Activated CD4-positive, alpha-beta T cell treated with anti-CD3 and anti-CD28 coated beads for 36 hours (primary cell): ENCODE measurements at regions of chr7 and their contacts with region 1.

Region 1: GRCh38 chr7:150404805-150405583 is 25.9 kb downstream of the ZNF775 start:
- DNase-seq: peak; percentile 85
- ATAC-seq: peak; percentile 74
- H3K4me3 Mint-ChIP-seq: peak overlapping the region; percentile 90
- H3K27ac Mint-ChIP-seq: peak overlapping the region; percentile 91
- H3K4me1 Mint-ChIP-seq: peaks cover 49% of the 10 kb centered on the region
- H3K27me3 Mint-ChIP-seq: no peaks in the 10 kb centered on the region

Region 2: GRCh38 chr7:150322833-150323681 is 81.9 kb before region 1 on chr7 and contains the starts of genes ACTR3C and LRRC61:
- CTCF ChIA-PET with region 1: no interaction called
- POLR2A ChIA-PET with region 1: no interaction called
- intact Hi-C with region 1: loop called (anchors 1 to 2 kb)
- DNase-seq: peak; percentile 78
- ATAC-seq: peak; percentile 24
- H3K4me3 Mint-ChIP-seq: peak within 1 kb of the TSS; percentile 91
- H3K27ac Mint-ChIP-seq: peak within 1 kb of the TSS; percentile 99
- H3K4me1 Mint-ChIP-seq: peaks cover 52% of the 10 kb centered on the region
- H3K27me3 Mint-ChIP-seq: no peaks in the 10 kb centered on the region
- total RNA-seq, gene ACTR3C: 3.2 to 4.7 TPM
- total RNA-seq, gene LRRC61: 13.0 to 17.4 TPM

Region 3: GRCh38 chr7:150368096-150368883 is 36.7 kb before region 1 on chr7 and contains the start of gene REPIN1:
- CTCF ChIA-PET with region 1: interaction called, 5 read pairs
- POLR2A ChIA-PET with region 1: interaction called, 3 read pairs
- intact Hi-C with region 1: loop called (anchors 1 to 2 kb)
- DNase-seq: peak; percentile 88
- ATAC-seq: peak; percentile 63
- H3K4me3 Mint-ChIP-seq: peak within 1 kb of the TSS; percentile 90
- H3K27ac Mint-ChIP-seq: peak within 1 kb of the TSS; percentile 97
- H3K4me1 Mint-ChIP-seq: peaks cover 37% of the 10 kb centered on the region
- H3K27me3 Mint-ChIP-seq: no peaks in the 10 kb centered on the region
- total RNA-seq, gene REPIN1: 48.2 to 55.6 TPM

Region 4: GRCh38 chr7:150420987-150421674 is 16.1 kb after region 1 on chr7:
- CTCF ChIA-PET with region 1: interaction called, 10 read pairs
- POLR2A ChIA-PET with region 1: no interaction called
- intact Hi-C with region 1: loop called (anchors 1 to 2 kb)
- DNase-seq: peak; percentile 93
- ATAC-seq: peak; percentile 100
- H3K4me3 Mint-ChIP-seq: no peak overlapping the region
- H3K27ac Mint-ChIP-seq: peak overlapping the region; percentile 2
- H3K4me1 Mint-ChIP-seq: peaks cover 5% of the 10 kb centered on the region
- H3K27me3 Mint-ChIP-seq: no peaks in the 10 kb centered on the region

Region 5: GRCh38 chr7:150435390-150436073 is 30.5 kb after region 1 on chr7:
- CTCF ChIA-PET with region 1: interaction called, 12 read pairs
- POLR2A ChIA-PET with region 1: interaction called, 3 read pairs
- intact Hi-C with region 1: no loop called
- DNase-seq: no peak
- ATAC-seq: no peak
- H3K4me3 Mint-ChIP-seq: no peak overlapping the region
- H3K27ac Mint-ChIP-seq: no peak overlapping the region
- H3K4me1 Mint-ChIP-seq: peaks cover 24% of the 10 kb centered on the region
- H3K27me3 Mint-ChIP-seq: peaks cover 3% of the 10 kb centered on the region